ENCODE measurements at regions of chr12 and their contacts with region 1.

Region 1: GRCh38 chr12:54398995-54399793 is 14.7 kb upstream of the ZNF385A start:
- DNase-seq: peak; percentile 76 to 94 (median 84)
- ATAC-seq: peak; percentile 96
- H3K4me3 ChIP-seq: no peak overlapping the region
- H3K4me3 Mint-ChIP-seq: no peak overlapping the region
- H3K27ac ChIP-seq: no peak overlapping the region
- H3K27ac Mint-ChIP-seq: peak overlapping the region in 7 of 9 donors; percentile 5 to 74 (median 52)
- H3K4me1 ChIP-seq: no peaks in the 10 kb centered on the region
- H3K4me1 Mint-ChIP-seq: peaks cover 13 to 31% (median 16%) of the 10 kb centered on the region in 7 donors
- H3K27me3 ChIP-seq: no peaks in the 10 kb centered on the region
- H3K27me3 Mint-ChIP-seq: no peaks in the 10 kb centered on the region

Region 2: DNA sequence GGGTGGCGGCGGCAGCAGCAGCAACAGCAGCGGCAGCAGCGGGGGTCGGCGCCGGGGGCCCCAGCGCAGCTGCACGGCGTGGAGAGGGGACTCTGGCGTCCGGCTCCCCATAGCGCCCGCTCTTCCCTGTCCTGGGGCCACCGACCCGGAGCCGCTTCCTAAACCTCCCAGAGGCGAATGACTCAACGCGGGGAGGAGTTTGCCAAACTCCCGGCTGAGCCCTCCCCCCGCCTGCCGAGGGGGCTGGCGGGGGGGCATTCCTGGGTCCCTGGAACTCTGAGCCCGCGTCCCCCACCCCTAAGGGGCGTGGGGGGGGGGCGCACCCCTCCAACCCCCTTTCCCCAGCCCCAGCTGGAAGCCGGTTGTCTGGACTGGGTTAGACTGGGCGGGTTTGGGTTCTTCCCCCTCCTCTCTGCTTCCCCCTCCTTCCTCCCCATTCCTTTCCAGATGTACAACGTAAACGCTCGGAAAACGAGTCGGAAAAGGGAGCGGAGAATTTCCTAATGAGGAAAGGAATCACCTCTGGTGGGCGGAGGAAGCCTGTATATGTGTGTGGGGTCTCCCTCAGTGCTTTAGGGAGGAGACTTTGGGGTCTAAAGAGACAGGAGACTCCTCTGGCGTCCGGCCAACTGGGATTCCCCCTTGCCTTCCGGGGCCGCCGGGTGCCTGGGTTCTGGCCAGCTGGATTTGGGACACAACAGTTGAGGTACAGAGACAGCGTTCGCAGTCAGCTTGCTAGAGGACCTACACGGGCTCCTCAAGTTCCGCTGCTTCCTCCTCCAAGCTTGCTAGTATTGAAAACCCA is 20.1 kb after region 1 on chr12 and contains the start of gene ITGA5:
- CTCF ChIA-PET with region 1: interaction called, 162 read pairs
- POLR2A ChIA-PET with region 1: interaction called, 31 read pairs
- intact Hi-C with region 1: no loop called
- DNase-seq: peak in 4 of 9 donors; percentile 16 to 53 (median 28)
- ATAC-seq: peak; percentile 48
- H3K4me3 ChIP-seq: peak within 1 kb of the TSS; percentile 86
- H3K4me3 Mint-ChIP-seq: peak within 1 kb of the TSS; percentile 78 to 98 (median 94)
- H3K27ac ChIP-seq: peak within 1 kb of the TSS; percentile 96
- H3K27ac Mint-ChIP-seq: peak within 1 kb of the TSS; percentile 87 to 100 (median 97)
- H3K4me1 ChIP-seq: peaks cover 44 to 49% of the 10 kb centered on the region in 2 donors
- H3K4me1 Mint-ChIP-seq: peaks cover 34 to 63% (median 52%) of the 10 kb centered on the region in 7 donors
- H3K27me3 ChIP-seq: no peaks in the 10 kb centered on the region
- H3K27me3 Mint-ChIP-seq: peaks cover 0 to 24% (median 0%) of the 10 kb centered on the region in 5 donors
- total RNA-seq, gene ITGA5: 73.9 to 169 (median 145) TPM

Region 3: GRCh38 chr12:54431911-54432814 is 33.0 kb after region 1 on chr12:
- CTCF ChIA-PET with region 1: interaction called, 452 read pairs
- POLR2A ChIA-PET with region 1: interaction called, 71 read pairs
- intact Hi-C with region 1: no loop called
- DNase-seq: peak in 1 of 9 donors; percentile 49
- ATAC-seq: no peak
- H3K4me3 ChIP-seq: no peak overlapping the region
- H3K4me3 Mint-ChIP-seq: peak overlapping the region in 2 of 10 donors; percentile 5 to 80
- H3K27ac ChIP-seq: no peak overlapping the region
- H3K27ac Mint-ChIP-seq: peak overlapping the region in 5 of 9 donors; percentile 7 to 87 (median 49)
- H3K4me1 ChIP-seq: peaks cover 13 to 23% of the 10 kb centered on the region in 2 donors
- H3K4me1 Mint-ChIP-seq: peaks cover 20 to 56% (median 38%) of the 10 kb centered on the region in 7 donors
- H3K27me3 ChIP-seq: no peaks in the 10 kb centered on the region
- H3K27me3 Mint-ChIP-seq: peaks cover 0 to 13% (median 0%) of the 10 kb centered on the region in 5 donors

Region 4: DNA sequence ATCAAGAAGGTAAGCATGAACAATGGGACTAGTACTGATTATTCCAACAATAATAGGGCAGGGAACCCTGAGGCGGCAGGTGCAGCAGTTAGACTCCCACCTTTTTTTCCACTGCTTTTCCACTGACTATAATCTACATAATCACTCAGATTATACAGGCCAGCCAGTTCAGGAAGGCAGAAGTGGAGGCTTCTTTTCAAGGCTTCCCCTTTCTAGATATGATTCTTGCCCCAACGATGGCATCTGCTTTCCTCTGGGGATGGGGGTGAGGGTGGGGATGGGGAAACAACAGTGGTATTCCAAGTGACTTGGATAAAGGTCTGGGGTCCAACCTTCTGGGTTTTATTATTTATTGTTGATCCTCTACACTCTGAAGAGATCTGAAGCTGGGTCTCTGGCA is 98.7 kb after region 1 on chr12:
- CTCF ChIA-PET with region 1: interaction called, 13 read pairs
- POLR2A ChIA-PET with region 1: interaction called, 5 read pairs
- intact Hi-C with region 1: loop called (anchors 1 to 5 kb)
- DNase-seq: no peak
- ATAC-seq: peak; percentile 3
- H3K4me3 ChIP-seq: peak overlapping the region; percentile 89
- H3K4me3 Mint-ChIP-seq: peak overlapping the region; percentile 97 to 99 (median 98)
- H3K27ac ChIP-seq: peak overlapping the region; percentile 77
- H3K27ac Mint-ChIP-seq: peak overlapping the region; percentile 88 to 98 (median 96)
- H3K4me1 ChIP-seq: peaks cover 19 to 31% of the 10 kb centered on the region in 2 donors
- H3K4me1 Mint-ChIP-seq: peaks cover 30 to 58% (median 41%) of the 10 kb centered on the region in 7 donors
- H3K27me3 ChIP-seq: no peaks in the 10 kb centered on the region
- H3K27me3 Mint-ChIP-seq: no peaks in the 10 kb centered on the region

Region 5: DNA sequence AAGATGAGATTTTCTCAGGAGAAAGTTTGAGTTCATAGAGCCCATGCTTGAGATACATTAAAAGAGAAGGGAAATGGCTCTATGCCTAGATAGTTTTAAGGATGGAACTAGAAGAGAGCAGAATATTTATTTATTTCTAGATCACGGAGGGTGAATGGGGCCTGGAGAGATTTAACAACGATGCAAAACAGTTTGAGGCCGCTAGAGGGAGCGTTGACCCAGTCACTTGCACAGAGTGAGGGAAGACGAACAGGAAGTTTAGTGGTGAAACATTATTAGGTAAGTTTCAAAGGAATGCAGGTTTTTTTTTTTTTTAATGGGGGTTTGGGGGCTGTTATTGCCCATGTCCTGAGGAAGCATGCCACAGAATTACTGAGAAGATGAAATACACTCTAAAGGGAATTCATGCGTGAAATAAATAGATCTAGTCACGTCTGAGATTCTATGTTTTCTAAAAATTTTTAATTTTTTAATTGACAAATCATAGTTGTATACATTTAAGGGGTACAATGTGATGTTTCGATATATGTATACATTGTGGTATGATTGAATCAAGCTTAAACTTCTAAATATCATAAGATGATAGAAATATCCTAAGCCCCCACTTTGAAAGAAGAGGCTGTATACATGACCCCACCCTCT is 204.1 kb after region 1 on chr12:
- CTCF ChIA-PET with region 1: no interaction called
- POLR2A ChIA-PET with region 1: no interaction called
- intact Hi-C with region 1: no loop called
- DNase-seq: peak in 8 of 9 donors; percentile 20 to 68 (median 57)
- ATAC-seq: peak; percentile 93
- H3K4me3 ChIP-seq: no peak overlapping the region
- H3K4me3 Mint-ChIP-seq: peak overlapping the region in 1 of 10 donors; percentile 49
- H3K27ac ChIP-seq: no peak overlapping the region
- H3K27ac Mint-ChIP-seq: peak overlapping the region in 2 of 9 donors; percentile 5 to 33
- H3K4me1 ChIP-seq: no peaks in the 10 kb centered on the region
- H3K4me1 Mint-ChIP-seq: peaks cover 0 to 8% (median 7%) of the 10 kb centered on the region in 7 donors
- H3K27me3 ChIP-seq: no peaks in the 10 kb centered on the region
- H3K27me3 Mint-ChIP-seq: peaks cover 0 to 32% (median 12%) of the 10 kb centered on the region in 5 donors